ENCODE measurements at regions of chr7 and their contacts with region 1.

Region 1: GRCh38 chr7:107150375-107151073 is 18.3 kb upstream of the HBP1 start:
- DNase-seq: peak; percentile 82
- ATAC-seq: peak; percentile 70
- H3K4me3 Mint-ChIP-seq: no peak overlapping the region
- H3K27ac Mint-ChIP-seq: no peak overlapping the region
- H3K4me1 Mint-ChIP-seq: peaks cover 6% of the 10 kb centered on the region
- H3K27me3 Mint-ChIP-seq: no peaks in the 10 kb centered on the region

Region 2: DNA sequence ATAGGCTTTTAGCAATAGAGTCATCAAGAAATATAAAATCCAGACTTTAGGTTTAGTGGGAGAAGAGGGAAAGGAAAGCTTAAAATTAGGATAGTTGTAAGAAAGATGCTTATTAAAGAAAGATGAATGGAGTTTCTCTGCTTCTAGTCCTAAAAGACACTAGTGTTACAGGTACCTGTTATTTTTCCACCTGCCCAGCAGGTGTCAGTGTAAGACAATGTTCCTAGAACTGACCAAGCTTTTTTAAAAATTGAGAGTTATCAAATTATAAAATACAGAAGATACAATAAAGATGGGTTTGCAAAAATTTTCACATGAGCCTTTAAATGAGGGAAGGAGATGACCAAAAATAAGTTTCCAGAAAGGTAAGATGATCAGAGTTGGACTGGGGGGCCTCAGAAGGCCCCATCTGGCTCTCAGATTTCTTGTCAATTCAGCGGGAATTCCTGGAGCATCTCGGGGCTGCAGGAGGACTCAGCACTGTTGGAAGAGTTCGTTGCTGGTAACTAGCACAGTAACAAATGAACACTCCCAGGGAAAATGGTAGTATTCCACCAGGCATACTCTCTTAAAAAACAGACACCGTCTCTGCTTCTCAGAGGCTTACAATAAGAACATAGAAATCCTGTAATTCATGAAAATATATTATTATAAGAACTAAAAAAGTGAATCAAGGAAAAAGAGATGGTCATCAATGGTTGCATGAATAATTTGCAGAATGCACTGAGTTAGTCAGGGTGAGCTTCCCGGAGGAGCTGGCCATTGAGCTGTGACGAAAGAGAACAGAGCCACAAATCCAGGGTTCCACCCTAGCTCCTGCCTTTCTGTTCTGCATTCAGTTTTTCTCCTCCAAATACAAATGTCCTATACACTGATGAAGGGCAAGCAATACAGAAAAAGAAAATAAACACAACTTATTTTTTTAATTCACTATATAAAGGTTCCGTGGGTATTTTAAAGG is 357.2 kb before region 1 on chr7:
- CTCF ChIA-PET with region 1: interaction called, 22 read pairs
- DNase-seq: no peak
- ATAC-seq: no peak
- H3K4me3 Mint-ChIP-seq: no peak overlapping the region
- H3K27ac Mint-ChIP-seq: no peak overlapping the region
- H3K4me1 Mint-ChIP-seq: peaks cover 2% of the 10 kb centered on the region
- H3K27me3 Mint-ChIP-seq: no peaks in the 10 kb centered on the region

Region 3: GRCh38 chr7:106883456-106884026 is 267.0 kb before region 1 on chr7:
- CTCF ChIA-PET with region 1: no interaction called
- DNase-seq: no peak
- ATAC-seq: no peak
- H3K4me3 Mint-ChIP-seq: no peak overlapping the region
- H3K27ac Mint-ChIP-seq: no peak overlapping the region
- H3K4me1 Mint-ChIP-seq: peaks cover 17% of the 10 kb centered on the region
- H3K27me3 Mint-ChIP-seq: no peaks in the 10 kb centered on the region

Region 4: GRCh38 chr7:106947244-106947728 is 203.2 kb before region 1 on chr7:
- CTCF ChIA-PET with region 1: interaction called, 41 read pairs
- DNase-seq: peak; percentile 49
- ATAC-seq: peak; percentile 61
- H3K4me3 Mint-ChIP-seq: no peak overlapping the region
- H3K27ac Mint-ChIP-seq: no peak overlapping the region
- H3K4me1 Mint-ChIP-seq: no peaks in the 10 kb centered on the region
- H3K27me3 Mint-ChIP-seq: peaks cover 9% of the 10 kb centered on the region

Region 5: DNA sequence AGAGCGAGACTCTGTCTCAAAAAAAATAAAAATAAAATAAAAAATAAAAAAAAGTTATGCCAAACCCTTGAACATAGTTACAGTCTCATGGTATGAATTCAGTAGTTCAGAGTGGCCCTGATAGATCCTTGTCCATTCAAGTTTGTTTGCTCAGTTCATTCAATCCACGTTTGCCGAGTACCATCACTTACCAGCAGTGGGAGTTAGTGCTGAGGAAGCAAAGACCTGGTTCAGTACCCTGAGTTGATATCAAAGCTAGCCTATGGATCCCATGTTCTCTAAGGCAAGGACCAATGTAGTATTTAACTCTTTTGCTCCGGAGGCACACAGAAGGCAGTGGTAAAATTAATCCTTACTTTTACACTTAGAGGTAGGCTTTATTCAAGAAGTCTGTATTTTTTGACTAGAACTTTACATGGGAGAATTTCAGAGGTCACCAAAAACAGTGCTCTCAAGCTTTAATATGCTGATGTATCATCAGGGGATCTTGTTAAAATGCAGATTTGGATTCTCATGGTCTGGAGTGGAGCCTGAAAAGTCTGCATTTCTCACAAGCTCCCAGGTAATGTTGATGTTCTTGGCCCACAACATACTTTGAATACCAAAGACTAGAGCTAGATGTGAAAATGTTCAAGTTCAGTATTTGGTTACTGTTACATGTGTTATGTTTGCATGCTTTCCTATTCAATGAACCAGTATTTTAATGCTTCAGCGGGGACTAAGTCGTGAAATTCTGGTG is 19.9 kb before region 1 on chr7:
- CTCF ChIA-PET with region 1: interaction called, 10 read pairs
- DNase-seq: no peak
- ATAC-seq: no peak
- H3K4me3 Mint-ChIP-seq: no peak overlapping the region
- H3K27ac Mint-ChIP-seq: no peak overlapping the region
- H3K4me1 Mint-ChIP-seq: peaks cover 11% of the 10 kb centered on the region
- H3K27me3 Mint-ChIP-seq: peaks cover 8% of the 10 kb centered on the region

Region 6: DNA sequence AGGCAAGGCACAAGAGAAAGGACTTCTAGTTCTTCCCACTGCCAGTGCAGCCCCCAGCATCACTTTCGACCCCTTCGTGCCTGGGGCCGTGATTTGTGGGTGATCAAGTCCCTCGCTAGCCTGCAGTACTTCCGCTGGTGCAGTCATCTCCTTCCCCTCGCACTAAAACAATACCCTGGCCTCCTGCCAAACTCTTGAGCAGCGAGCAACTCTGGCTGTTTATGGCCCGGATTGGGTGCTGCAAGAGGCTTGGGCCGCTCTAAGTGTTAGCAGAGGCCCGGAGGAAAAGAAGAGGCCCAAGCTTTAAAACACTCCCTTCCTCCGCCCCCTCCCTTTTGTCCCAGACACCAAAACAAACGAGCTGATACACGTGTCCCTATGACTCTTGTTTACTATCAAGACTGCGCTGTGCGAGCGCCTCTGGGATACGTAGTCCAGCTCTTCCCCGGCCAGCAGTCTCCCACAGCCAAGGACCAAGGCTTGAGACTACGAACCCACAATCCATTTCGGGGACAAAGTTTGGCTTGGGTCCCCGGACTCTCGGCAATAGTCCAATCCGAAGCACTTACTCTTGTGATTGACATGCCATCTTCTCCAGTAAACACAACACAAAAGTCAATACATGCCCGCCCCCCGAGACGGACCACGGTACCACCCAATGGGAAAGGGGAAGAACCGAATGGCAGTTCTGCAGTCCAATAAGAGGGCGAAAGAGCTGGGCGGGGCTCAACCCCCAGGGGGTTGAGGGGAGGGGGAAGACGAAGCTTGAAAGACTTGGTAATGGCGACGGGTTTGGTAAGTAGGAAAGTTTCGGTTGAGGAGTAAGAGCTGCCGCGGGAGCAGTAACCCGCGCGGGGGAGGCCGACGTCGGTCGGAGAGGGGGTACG is 18.0 kb after region 1 on chr7 and contains the start of gene HBP1:
- CTCF ChIA-PET with region 1: interaction called, 19 read pairs
- DNase-seq: peak; percentile 99
- ATAC-seq: peak; percentile 89
- H3K4me3 Mint-ChIP-seq: peak within 1 kb of the TSS; percentile 94
- H3K27ac Mint-ChIP-seq: peak within 1 kb of the TSS; percentile 100
- H3K4me1 Mint-ChIP-seq: peaks cover 30% of the 10 kb centered on the region
- H3K27me3 Mint-ChIP-seq: peaks cover 6% of the 10 kb centered on the region
- total RNA-seq, gene HBP1: 22.5 to 25.5 TPM